ENCODE measurements at regions of chr11 and their contacts with region 1.

Region 1: DNA sequence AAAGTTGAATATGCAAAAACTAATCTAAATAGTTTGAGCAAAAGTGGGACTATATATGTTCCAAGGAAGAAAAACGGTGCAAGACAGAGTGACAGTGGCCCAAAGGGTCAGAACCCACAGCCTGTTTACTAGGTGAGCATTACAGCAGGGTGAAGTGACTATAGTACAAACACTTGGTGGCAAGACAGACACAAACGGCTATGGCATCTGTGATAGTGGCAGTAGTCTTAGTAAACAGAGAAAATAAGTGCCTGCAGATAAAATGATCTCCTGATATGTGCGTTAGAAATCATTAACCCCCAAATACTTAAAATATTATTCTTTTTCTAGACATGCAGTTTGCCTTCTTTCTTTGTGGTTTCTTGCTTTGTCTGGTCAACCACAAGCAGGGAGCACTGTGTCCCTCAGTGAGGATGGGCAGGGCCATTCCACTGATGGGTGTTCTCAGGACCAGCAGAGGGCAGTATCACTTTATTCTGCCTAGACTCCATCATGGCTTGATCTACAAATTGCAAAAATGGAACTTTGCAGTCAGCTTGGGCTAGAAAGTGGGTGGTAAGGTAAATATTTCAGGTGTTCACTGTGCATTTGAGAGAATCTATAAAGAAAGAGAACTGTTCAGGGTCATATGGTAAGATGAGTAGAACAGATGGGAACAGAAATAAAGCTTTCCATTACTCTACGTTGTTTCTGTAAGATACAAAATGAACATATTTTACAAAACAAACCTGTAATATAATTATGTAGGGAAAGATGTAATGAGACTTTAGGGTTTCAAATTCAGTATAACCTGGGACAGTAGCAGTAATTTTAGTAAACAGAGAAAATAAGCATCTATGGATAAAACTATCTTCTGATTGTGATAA is 198.2 kb downstream of the SWAP70 start:
- DNase-seq: peak in 1 of 2 experiments; percentile 67
- H3K4me3 ChIP-seq: no peak overlapping the region
- H3K27ac ChIP-seq: no peak overlapping the region
- H3K4me1 ChIP-seq: peaks cover 3 to 21% (median 13%) of the 10 kb centered on the region in 4 experiments; a peak in 5 of 7 replicates
- H3K27me3 ChIP-seq: no peaks in the 10 kb centered on the region
- CTCF ChIP-seq: peak; percentile 84 to 91 (median 87)
- EP300 ChIP-seq: no peak
- POLR2A ChIP-seq: no peak
- RAD21 ChIP-seq: peak; percentile 86 to 87

Region 2: DNA sequence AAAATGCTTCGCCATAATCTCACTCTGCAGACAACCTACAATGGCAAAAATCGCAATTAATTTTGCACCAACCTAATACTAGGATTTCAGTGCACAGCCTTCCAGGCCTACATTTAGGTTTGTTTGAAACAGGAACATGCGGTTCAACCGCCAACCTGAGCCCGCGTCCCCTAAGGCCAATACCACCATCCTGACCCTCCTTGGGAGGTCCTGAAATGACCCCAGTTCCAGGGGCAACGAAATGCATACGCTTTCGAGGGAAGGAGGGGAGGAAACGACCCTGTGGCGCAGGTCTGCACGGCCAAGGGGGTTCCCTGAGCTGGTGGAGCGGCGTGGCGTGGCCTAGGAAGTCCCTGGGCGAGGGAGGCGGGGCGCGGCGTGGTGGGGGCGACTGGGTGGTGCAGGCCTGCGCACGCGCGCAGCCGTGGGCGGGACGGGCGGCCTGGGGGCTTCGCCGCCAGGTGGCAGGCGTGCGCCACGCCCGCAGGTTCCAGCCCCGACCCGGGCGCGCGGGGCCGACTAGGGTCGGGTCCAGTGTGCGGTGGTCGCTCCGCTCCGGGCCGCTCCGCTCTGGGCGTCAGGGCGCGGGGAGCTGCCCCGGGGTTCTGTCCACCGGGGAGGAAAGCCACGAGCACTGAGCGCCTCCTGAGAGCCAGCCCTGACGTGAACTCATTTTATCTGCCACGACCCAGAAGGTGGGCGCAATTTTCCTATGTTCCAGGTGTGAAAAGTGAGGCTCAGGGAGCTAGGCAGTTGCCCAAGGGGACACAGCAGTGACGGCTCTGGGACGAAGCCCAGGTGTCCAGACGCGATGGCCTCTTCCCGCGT is 104.1 kb before region 1 on chr11:
- CTCF ChIA-PET with region 1: interaction called, 14 read pairs
- POLR2A ChIA-PET with region 1: no interaction called
- DNase-seq: peak in 1 of 2 experiments; percentile 91
- H3K4me3 ChIP-seq: peak overlapping the region; percentile 23 to 59 (median 48)
- H3K27ac ChIP-seq: no peak overlapping the region
- H3K4me1 ChIP-seq: peaks cover 0 to 20% (median 14%) of the 10 kb centered on the region in 4 experiments; a peak in 6 of 7 replicates
- H3K27me3 ChIP-seq: no peaks in the 10 kb centered on the region
- CTCF ChIP-seq: peak; percentile 84 to 93 (median 91)
- EP300 ChIP-seq: no peak
- POLR2A ChIP-seq: 0 out of 3 replicates have a peak, but pooled peaks of 1 of the 2 experiments have one; percentile 27
- RAD21 ChIP-seq: peak; percentile 76 to 91

Region 3: GRCh38 chr11:9875862-9876261 is 13.8 kb after region 1 on chr11:
- CTCF ChIA-PET with region 1: interaction called, 13 read pairs
- POLR2A ChIA-PET with region 1: no interaction called
- DNase-seq: no peak
- H3K4me3 ChIP-seq: no peak overlapping the region
- H3K27ac ChIP-seq: no peak overlapping the region
- H3K4me1 ChIP-seq: peaks cover 0 to 4% (median 0%) of the 10 kb centered on the region in 4 experiments; a peak in 1 of 7 replicates
- H3K27me3 ChIP-seq: no peaks in the 10 kb centered on the region
- CTCF ChIP-seq: no peak
- EP300 ChIP-seq: no peak
- POLR2A ChIP-seq: no peak
- RAD21 ChIP-seq: no peak

Measured in H1 (cell line).